ENCODE measurements at regions of chr1 and their contacts with region 1.

Region 1: DNA sequence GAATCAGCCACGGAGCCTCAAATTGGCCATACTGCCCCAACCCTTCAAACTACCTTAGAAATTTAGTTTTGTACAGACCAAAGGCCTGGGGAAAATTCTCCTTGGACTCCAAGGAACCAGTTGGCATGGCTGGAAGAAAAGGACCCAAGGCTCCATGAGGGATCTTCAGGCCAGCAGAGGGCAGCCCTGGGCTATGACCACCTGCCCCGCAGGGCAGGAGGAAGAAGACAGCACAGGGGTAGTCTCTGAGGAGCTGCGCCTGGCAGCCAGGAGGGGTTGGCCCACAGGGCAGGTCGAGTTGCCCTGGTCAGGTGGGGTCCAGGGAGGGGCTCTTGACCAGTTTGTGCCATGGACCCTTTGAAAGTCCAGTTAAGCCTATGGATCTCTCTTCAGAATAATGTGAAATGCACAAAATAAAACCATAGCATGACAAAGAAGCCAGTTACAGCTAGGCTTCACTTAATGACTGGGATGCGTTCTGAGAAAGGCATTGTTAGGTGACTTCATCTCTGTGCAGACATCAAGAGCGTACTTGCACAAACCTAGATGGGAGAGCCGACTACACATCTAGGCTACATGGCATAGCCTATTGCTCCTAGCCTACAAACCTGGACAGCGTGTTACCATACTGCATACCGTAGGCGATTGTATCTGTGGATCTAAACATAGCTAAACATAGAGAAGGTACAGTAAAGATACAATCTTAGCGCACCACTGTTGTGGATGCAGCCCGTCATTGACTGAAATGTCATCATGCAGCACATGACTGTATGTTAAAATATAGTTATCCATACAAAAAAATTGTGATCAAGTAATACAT is 26.1 kb downstream of the CACNA1S start:
- DNase-seq: no peak
- H3K4me3 ChIP-seq: no peak overlapping the region
- H3K27me3 ChIP-seq: peaks cover 11% of the 10 kb centered on the region
- CTCF ChIP-seq: peak; percentile 85

Region 2: GRCh38 chr1:201114236-201115131 is 28.4 kb after region 1 on chr1:
- CTCF ChIA-PET with region 1: interaction called, 58 read pairs
- POLR2A ChIA-PET with region 1: no interaction called
- DNase-seq: peak; percentile 61
- H3K4me3 ChIP-seq: peak overlapping the region; percentile 58
- H3K27me3 ChIP-seq: peaks cover 3% of the 10 kb centered on the region; the same call in 1 of the 2 replicates
- CTCF ChIP-seq: peak; percentile 92

Region 3: DNA sequence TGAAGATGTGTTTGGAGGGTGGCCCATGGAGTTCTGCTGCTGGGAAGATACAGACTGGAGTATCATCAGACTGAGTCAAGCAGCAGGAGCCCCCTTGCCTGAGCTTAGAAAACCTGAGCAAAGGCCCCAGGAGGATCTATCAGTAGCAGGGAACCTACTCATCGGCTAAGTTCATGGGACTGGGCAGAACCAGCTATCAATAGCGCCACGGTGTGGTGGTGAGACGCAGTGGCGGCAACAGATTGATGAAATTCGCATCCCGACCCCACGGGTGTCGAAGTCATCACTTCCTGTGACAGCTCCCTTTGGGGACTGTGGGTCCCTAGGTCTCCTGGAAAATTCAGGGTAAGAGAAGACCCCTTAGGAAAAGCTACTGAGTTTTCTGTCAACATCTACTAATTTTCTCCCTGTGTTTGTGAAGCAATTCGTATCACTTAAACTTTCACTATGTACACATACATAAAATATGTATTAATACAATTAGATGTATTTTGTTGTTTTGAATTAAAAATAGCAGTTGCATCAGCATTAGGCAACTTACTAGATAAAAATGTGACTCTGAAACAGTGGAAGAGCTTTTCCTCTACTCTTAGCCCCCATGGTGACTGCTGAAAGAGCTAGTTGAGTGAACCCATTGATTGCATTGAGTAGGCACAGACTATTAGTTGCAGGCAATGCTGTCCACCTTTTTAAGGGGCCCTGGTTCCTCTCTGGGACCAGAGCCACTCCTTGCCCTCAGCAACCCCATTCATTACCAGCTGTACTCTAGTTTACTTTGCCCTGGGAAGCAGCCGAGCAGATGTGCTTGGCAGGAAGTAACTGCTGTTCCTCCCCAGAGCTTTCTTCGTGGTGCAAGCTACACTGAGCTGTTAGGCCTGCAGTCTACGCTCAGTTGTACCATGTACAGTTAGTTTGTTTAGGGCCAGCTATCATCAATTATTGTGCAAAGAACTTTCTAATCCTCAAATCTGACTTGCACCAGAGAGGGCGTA is 33.4 kb after region 1 on chr1:
- CTCF ChIA-PET with region 1: interaction called, 58 read pairs
- POLR2A ChIA-PET with region 1: no interaction called
- DNase-seq: no peak
- H3K4me3 ChIP-seq: no peak overlapping the region
- H3K27me3 ChIP-seq: peaks cover 10% of the 10 kb centered on the region
- CTCF ChIP-seq: peak; percentile 47

Region 4: GRCh38 chr1:201184307-201185122 is 98.4 kb after region 1 on chr1:
- CTCF ChIA-PET with region 1: interaction called, 10 read pairs
- POLR2A ChIA-PET with region 1: no interaction called
- DNase-seq: peak; percentile 54
- H3K4me3 ChIP-seq: no peak overlapping the region
- H3K27me3 ChIP-seq: no peaks in the 10 kb centered on the region; the same call in none of the 2 replicates
- CTCF ChIP-seq: peak; percentile 87

Region 5: DNA sequence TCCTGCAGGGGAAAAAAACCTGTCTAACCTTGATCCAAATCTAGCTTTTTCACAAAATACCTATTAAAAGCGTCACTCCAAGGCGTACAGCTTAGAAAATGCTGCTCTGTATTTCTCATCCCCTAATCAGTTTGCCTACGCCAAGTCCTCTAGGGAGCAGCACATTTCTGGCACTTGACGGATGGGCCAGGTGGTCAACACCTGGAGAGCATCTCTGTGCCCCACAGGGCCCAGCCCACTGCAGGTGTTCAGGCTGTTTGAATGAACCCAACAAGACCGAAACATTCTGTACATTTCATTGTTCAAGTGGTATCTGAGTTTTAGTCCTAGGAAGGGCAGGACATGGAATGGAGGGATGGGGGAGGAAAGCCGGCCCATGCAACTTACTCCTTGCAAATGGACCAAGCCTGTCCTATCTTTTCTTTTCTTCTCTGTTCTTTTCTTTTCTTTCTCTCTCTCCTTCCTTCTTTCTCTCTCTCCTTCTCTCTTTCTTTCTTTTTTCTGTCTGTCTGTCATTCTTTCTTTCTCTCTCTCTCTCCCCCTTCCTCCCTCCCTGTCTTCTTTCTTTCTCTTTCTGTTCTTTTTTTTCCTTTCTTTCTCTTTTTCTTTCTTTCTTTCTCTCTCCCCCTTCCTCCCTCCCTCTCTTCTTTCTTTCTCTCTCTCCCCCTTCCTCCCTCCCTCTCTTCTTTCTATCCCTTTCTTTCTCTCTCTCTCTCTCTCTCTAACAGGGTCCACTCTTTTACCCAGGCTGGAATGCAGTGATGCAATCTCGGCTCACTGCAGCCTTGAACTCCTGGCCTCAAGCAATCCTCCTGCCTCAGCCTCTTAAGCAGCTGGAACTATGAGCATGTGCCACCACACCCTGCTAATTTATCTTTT is 133.6 kb after region 1 on chr1:
- CTCF ChIA-PET with region 1: interaction called, 24 read pairs
- POLR2A ChIA-PET with region 1: no interaction called
- DNase-seq: no peak
- H3K4me3 ChIP-seq: no peak overlapping the region
- H3K27me3 ChIP-seq: peaks cover 4% of the 10 kb centered on the region
- CTCF ChIP-seq: no peak

Region 6: GRCh38 chr1:201275041-201275676 is 189.0 kb after region 1 on chr1:
- CTCF ChIA-PET with region 1: no interaction called
- POLR2A ChIA-PET with region 1: no interaction called
- DNase-seq: no peak
- H3K4me3 ChIP-seq: no peak overlapping the region
- H3K27me3 ChIP-seq: no peaks in the 10 kb centered on the region
- CTCF ChIP-seq: no peak